ENCODE measurements at regions of chr1 and their contacts with region 1.

Region 1: GRCh38 chr1:30718636-30719405 is 4.6 kb downstream of the MATN1 start:
- DNase-seq: peak; percentile 92
- ATAC-seq: peak; percentile 63
- H3K4me3 Mint-ChIP-seq: peak overlapping the region; percentile 85
- H3K27ac Mint-ChIP-seq: peak overlapping the region; percentile 93
- H3K4me1 Mint-ChIP-seq: peaks cover 11% of the 10 kb centered on the region
- H3K27me3 Mint-ChIP-seq: no peaks in the 10 kb centered on the region

Region 2: GRCh38 chr1:30586671-30587070 is 132.2 kb before region 1 on chr1:
- POLR2A ChIA-PET with region 1: no interaction called
- DNase-seq: no peak
- ATAC-seq: no peak
- H3K4me3 Mint-ChIP-seq: no peak overlapping the region
- H3K27ac Mint-ChIP-seq: no peak overlapping the region
- H3K4me1 Mint-ChIP-seq: peaks cover 1% of the 10 kb centered on the region
- H3K27me3 Mint-ChIP-seq: peaks cover 23% of the 10 kb centered on the region

Region 3: DNA sequence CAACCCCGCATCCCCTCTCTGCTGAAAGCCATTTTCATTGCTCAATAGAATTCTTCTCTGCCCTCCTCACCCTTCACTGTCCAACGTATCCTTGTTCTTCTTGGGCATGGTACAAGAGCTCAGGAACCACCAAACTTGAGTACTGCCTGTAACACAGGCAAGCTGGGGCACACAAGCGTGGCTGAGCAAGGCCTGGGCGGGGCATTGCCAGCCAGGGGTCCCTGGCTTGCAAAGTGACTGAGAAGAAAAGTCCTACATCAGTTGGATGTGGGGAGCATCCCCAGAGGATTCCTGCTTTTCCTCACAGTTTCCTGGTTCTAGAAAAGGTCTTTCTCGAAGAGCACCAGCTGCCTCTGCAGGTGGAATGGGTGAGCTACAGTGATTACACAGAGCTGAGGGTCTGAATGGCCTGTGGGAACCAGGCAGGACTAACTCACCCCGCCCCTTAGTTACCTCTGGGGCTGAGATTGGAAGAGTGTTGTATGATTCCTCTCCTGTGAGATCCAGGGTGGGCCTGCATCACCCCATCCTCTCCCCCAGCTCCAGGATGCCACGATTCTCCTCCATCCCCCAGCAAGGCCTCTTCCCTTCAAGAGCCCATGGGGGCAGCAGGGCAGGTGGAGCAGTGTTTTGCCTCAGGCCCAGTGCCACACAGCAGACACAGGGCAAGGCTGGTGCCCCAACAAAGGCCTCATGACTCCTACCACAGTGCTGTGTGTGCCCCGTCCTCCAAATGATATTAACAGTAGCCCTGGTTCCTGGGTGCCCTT is 117.3 kb before region 1 on chr1:
- POLR2A ChIA-PET with region 1: no interaction called
- DNase-seq: no peak
- ATAC-seq: no peak
- H3K4me3 Mint-ChIP-seq: no peak overlapping the region
- H3K27ac Mint-ChIP-seq: no peak overlapping the region
- H3K4me1 Mint-ChIP-seq: no peaks in the 10 kb centered on the region
- H3K27me3 Mint-ChIP-seq: peaks cover 4% of the 10 kb centered on the region

Region 4: DNA sequence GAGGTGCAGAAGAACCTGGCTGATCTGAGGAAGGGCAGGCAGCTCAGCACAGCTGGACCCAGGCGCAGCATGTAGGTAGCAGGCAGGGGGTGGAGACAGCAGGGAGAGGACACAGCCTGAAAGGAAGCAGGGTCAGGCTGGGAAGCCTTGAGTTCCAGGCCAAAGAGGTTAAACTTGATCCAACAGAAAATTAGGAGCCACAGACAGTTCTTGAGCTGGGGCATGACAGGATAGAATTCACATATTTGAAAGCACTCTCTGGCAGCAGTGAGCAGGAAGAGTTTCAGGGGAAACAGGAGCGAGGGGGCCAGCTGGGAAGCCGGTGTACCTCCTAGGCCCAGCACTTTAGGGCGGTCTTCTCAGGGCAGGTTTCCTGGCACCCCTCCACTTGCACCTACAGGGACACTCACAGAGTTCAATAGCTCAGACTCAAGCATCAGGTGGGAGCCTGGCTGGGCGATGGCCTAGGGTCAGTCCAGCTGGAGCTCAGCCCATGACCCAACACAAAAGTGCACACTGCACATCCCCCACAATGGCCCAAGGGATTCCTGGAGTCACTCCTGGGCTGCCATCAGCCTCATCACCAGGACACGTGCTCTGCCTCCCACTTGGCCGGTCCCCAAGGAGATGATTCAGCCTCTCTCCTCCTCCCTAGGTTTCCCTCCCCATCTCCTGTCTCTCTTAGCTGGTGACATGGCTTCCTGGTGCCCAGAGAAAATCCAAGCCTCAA is 18.1 kb before region 1 on chr1:
- POLR2A ChIA-PET with region 1: no interaction called
- DNase-seq: no peak
- ATAC-seq: no peak
- H3K4me3 Mint-ChIP-seq: no peak overlapping the region
- H3K27ac Mint-ChIP-seq: no peak overlapping the region
- H3K4me1 Mint-ChIP-seq: no peaks in the 10 kb centered on the region
- H3K27me3 Mint-ChIP-seq: no peaks in the 10 kb centered on the region

Region 5: DNA sequence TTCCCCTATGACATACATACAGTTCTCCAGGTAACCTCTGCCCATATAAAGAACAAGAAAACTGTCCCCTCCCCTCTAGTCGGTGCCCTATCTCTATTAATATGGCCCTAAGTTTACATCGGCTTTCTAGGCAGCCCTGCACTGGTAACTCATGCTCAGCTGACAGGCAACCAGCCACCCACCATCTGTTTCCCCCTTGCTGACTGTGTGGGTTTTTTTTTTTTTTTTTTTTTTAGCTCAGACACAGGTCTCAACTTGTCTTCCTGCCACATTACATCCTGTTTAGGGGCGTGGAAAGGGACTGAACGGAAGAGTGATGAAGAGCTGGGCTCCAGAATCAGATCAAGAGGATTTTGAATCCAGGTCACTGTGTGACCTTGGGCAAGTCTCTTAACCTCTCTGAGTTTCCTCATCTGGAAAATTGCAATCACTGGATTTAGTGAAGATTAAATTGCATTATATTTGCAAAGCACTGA is 24.8 kb after region 1 on chr1:
- POLR2A ChIA-PET with region 1: interaction called, 17 read pairs
- DNase-seq: no peak
- ATAC-seq: peak; percentile 75
- H3K4me3 Mint-ChIP-seq: peak overlapping the region; percentile 86
- H3K27ac Mint-ChIP-seq: peak overlapping the region; percentile 96
- H3K4me1 Mint-ChIP-seq: peaks cover 88% of the 10 kb centered on the region
- H3K27me3 Mint-ChIP-seq: no peaks in the 10 kb centered on the region

Region 6: GRCh38 chr1:30756545-30757195 is 37.8 kb after region 1 on chr1:
- POLR2A ChIA-PET with region 1: interaction called, 11 read pairs
- DNase-seq: peak; percentile 67
- ATAC-seq: peak; percentile 61
- H3K4me3 Mint-ChIP-seq: peak overlapping the region; percentile 99
- H3K27ac Mint-ChIP-seq: peak overlapping the region; percentile 99
- H3K4me1 Mint-ChIP-seq: peaks cover 75% of the 10 kb centered on the region
- H3K27me3 Mint-ChIP-seq: no peaks in the 10 kb centered on the region

Region 7: DNA sequence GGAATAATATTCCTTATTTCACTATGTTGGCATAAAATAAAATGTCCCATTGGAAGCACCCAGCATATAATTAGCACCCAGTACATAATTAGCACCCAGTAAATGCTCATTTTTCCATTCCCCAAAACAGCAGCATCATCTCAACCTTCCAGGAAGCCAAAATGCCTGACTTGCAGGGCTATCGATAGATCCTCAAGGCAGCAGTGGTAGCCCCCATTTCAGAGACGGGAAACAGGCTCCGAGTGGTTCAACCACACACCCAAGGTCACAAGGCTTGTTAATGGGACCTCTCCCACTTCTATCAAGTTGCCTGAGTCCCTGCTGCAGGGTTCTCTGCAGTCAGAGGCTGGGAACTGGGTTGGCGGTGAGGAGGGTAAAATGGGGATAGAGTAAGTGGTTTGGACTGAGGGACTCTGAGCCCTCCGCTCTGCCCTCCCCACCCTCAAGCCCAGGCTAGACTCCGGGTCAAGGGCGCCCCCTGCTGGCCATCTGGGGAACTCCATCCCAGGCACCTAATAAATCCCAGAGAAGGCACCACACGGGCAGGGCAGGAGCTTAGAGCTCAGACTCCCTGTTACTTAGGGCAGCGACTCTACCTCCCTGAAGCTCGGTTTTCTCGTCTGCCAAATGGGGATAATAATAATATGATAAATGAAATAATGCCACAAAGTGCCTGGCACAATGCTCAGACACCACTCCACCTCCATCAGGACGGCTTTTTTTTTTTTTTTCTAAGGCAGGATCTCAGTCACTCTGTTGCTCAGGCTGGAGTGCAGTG is 60.7 kb after region 1 on chr1:
- POLR2A ChIA-PET with region 1: interaction called, 34 read pairs
- DNase-seq: peak; percentile 95
- ATAC-seq: peak; percentile 82
- H3K4me3 Mint-ChIP-seq: peak overlapping the region; percentile 37
- H3K27ac Mint-ChIP-seq: peak overlapping the region; percentile 40
- H3K4me1 Mint-ChIP-seq: peaks cover 19% of the 10 kb centered on the region
- H3K27me3 Mint-ChIP-seq: peaks cover 5% of the 10 kb centered on the region

Region 8: DNA sequence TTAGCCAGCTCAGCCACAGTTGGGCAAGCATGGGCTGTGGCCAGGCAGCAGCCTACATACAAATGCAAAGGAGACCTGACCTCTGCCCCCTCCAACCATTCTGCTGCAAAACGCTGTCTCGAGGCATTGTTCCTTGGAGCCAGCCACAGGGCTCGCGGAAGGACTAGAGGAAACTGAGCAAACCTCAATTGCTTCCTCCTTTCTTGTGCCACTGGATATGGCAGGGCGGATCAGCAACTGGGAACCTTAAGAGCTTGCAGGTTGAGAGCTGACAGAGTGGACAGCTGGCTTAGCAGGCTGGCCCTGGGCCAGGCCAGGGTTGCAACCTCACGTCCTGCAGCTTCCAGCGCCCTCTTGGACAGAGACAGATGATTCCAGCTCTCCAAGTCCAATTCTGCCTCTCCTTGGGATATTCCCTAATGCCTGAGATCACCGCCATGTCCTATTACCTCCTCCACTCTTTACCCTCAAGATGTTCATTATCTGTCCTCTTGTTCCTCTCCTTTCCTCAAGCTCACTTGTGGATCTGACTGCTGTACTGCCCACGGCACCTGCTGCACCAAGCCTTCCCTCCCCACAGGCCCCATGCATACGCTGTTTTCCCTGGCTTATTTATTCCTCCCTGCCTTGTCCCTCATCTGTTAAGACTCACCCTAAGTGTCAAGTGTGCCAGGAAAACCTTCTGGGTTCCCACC is 122.2 kb after region 1 on chr1:
- POLR2A ChIA-PET with region 1: no interaction called
- DNase-seq: no peak
- ATAC-seq: no peak
- H3K4me3 Mint-ChIP-seq: no peak overlapping the region
- H3K27ac Mint-ChIP-seq: no peak overlapping the region
- H3K4me1 Mint-ChIP-seq: no peaks in the 10 kb centered on the region
- H3K27me3 Mint-ChIP-seq: peaks cover 64% of the 10 kb centered on the region